T-cell (primary cell): ENCODE measurements at regions of chr13 and their contacts with region 1.

Region 1: GRCh38 chr13:24693862-24694471 is 13.8 kb downstream of the ATP12A start:
- DNase-seq: peak in 11 of 35 experiments; percentile 8 to 70 (median 14)
- ATAC-seq: peak; percentile 51 to 78 (median 54)
- H3K4me3 ChIP-seq: peak overlapping the region in 1 of 2 donors; percentile 2
- H3K4me3 Mint-ChIP-seq: peak overlapping the region; percentile 5 to 49 (median 35)
- H3K27ac ChIP-seq: no peak overlapping the region
- H3K27ac Mint-ChIP-seq: peak overlapping the region in 1 of 2 donors; percentile 15
- H3K4me1 ChIP-seq: peaks cover 0 to 5% of the 10 kb centered on the region in 2 experiments
- H3K4me1 Mint-ChIP-seq: peaks cover 7 to 12% (median 9%) of the 10 kb centered on the region in 3 donors
- H3K27me3 ChIP-seq: peaks cover 3 to 50% of the 10 kb centered on the region in 2 experiments
- H3K27me3 Mint-ChIP-seq: peaks cover 40 to 59% of the 10 kb centered on the region in 2 donors

Region 2: GRCh38 chr13:24671386-24672107 is 22.4 kb before region 1 on chr13:
- CTCF ChIA-PET with region 1: no interaction called
- POLR2A ChIA-PET with region 1: no interaction called
- DNase-seq: peak in 1 of 35 experiments; percentile 52
- ATAC-seq: peak in 2 of 4 experiments; percentile 43 to 52
- H3K4me3 ChIP-seq: no peak overlapping the region
- H3K4me3 Mint-ChIP-seq: peak overlapping the region in 1 of 3 donors; percentile 33
- H3K27ac ChIP-seq: no peak overlapping the region
- H3K27ac Mint-ChIP-seq: no peak overlapping the region
- H3K4me1 ChIP-seq: peaks cover 0 to 11% of the 10 kb centered on the region in 2 experiments
- H3K4me1 Mint-ChIP-seq: peaks cover 8 to 14% (median 9%) of the 10 kb centered on the region in 3 donors
- H3K27me3 ChIP-seq: peaks cover 0 to 28% of the 10 kb centered on the region in 2 experiments
- H3K27me3 Mint-ChIP-seq: peaks cover 8 to 19% of the 10 kb centered on the region in 2 donors

Region 3: GRCh38 chr13:24727731-24728601 is 34.0 kb after region 1 on chr13:
- CTCF ChIA-PET with region 1: interaction called, 9 to 28 read pairs
- POLR2A ChIA-PET with region 1: interaction called in 1 of 2 experiments, 10 read pairs
- DNase-seq: peak; percentile 28 to 90 (median 68)
- ATAC-seq: peak; percentile 95 to 99 (median 96)
- H3K4me3 ChIP-seq: no peak overlapping the region
- H3K4me3 Mint-ChIP-seq: no peak overlapping the region
- H3K27ac ChIP-seq: no peak overlapping the region
- H3K27ac Mint-ChIP-seq: no peak overlapping the region
- H3K4me1 ChIP-seq: peaks cover 2 to 4% of the 10 kb centered on the region in 2 experiments
- H3K4me1 Mint-ChIP-seq: peaks cover 0 to 5% (median 0%) of the 10 kb centered on the region in 3 donors
- H3K27me3 ChIP-seq: peaks cover 0 to 11% of the 10 kb centered on the region in 2 experiments
- H3K27me3 Mint-ChIP-seq: peaks cover 8 to 11% of the 10 kb centered on the region in 2 donors